PC-3 (cell line): ENCODE measurements at regions of chr4 and their contacts with region 1.

Region 1: GRCh38 chr4:42412251-42412650 is 15.0 kb downstream of the SHISA3 start:
- DNase-seq: peak; percentile 89
- ATAC-seq: peak; percentile 72
- H3K4me3 ChIP-seq: peak overlapping the region; percentile 44
- H3K27ac ChIP-seq: peak overlapping the region; percentile 94
- H3K4me1 ChIP-seq: peaks cover 96% of the 10 kb centered on the region
- H3K27me3 ChIP-seq: no peaks in the 10 kb centered on the region
- CTCF ChIP-seq: no peak

Region 2: DNA sequence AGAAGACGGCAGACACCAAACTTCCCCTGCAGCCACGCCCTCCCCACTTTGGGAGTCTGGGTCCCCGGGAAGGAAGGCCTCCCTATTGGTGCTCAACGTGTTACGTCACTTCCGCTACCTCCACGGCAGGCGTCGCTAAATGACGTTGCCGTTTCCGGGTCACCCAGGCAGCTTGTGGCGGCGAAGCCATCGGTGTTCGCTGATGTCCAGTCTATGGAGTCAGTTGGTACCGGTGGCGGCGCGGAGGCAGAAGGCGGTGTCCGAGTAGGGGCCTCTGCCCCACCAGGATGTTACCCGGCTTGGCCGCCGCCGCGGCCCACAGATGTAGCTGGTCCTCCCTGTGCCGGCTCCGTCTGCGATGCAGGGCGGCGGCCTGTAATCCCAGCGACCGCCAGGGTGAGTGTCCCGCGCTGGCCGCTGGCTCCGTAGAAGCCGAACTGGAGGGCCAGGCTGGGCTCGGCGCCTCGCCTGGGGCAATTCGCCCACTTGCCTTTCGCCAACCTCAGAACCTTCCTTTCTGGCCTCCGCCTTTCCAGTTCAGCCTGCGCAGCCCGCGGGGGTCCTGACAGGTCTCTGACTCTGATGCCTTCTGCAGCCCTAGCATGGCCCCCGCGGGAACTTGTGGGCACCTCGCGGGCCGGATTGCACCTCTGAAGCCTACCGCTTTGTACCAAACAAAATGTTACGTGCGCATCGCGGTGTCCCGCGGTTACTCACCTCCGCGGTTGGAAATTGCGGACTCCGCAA is 421.7 kb before region 1 on chr4 and contains the start of gene SLC30A9:
- CTCF ChIA-PET with region 1: no interaction called
- POLR2A ChIA-PET with region 1: no interaction called
- intact Hi-C with region 1: loop called (anchors 5 kb)
- DNase-seq: peak; percentile 91
- ATAC-seq: peak; percentile 83
- H3K4me3 ChIP-seq: peak within 1 kb of the TSS; percentile 98
- H3K27ac ChIP-seq: peak within 1 kb of the TSS; percentile 32
- H3K4me1 ChIP-seq: peaks cover 15% of the 10 kb centered on the region
- H3K27me3 ChIP-seq: no peaks in the 10 kb centered on the region
- CTCF ChIP-seq: no peak; the same call in 1 of the 2 replicates
- total RNA-seq, gene SLC30A9: 32.4 and 32.7 TPM in 2 replicates

Region 3: DNA sequence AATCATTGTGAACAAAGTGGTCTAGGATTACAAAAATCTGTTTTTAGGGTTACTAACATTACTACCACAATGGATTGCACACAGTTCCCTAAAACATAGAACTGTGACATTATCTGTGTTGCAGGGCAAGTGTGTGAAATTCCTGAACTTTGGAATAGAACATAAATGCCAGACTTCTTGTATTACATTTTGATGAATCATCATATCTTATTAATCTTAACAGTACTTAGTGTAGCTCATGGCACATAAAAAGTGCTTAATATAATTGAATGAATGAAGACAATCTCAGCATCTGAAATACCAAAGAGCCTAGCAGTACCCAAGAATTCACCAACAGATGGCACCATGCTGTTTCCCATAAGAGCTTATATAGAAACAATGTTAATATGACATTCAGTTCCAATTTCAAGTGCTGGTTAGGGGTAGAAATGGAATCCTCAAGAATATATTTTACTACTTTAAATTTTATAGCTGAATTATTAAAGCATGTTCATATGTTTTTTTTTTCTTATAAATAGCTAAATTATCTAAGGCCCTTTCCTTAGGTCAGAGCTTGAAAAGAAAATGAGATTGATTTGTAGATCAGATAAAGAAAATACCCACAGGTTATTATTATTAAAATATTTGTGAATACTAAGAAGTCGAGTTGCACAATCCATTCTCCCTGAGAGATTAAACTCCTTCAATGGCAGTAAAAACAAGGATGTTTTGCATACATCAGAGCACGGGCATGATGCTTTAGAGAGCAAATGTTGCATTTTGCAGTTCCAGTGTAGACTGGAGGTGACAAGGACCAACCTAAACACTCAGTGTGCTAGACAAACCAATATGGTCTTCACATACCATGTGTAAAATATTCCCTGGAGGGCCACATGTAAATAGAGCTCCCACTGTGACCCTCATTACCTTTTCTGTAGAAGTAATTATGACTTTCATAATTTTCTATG is 40.7 kb before region 1 on chr4:
- CTCF ChIA-PET with region 1: interaction called, 4 read pairs
- POLR2A ChIA-PET with region 1: no interaction called
- intact Hi-C with region 1: loop called (anchors 5 kb)
- DNase-seq: peak; percentile 77
- ATAC-seq: peak; percentile 80
- H3K4me3 ChIP-seq: no peak overlapping the region
- H3K27ac ChIP-seq: no peak overlapping the region
- H3K4me1 ChIP-seq: no peaks in the 10 kb centered on the region
- H3K27me3 ChIP-seq: no peaks in the 10 kb centered on the region
- CTCF ChIP-seq: peak; percentile 68

Region 4: DNA sequence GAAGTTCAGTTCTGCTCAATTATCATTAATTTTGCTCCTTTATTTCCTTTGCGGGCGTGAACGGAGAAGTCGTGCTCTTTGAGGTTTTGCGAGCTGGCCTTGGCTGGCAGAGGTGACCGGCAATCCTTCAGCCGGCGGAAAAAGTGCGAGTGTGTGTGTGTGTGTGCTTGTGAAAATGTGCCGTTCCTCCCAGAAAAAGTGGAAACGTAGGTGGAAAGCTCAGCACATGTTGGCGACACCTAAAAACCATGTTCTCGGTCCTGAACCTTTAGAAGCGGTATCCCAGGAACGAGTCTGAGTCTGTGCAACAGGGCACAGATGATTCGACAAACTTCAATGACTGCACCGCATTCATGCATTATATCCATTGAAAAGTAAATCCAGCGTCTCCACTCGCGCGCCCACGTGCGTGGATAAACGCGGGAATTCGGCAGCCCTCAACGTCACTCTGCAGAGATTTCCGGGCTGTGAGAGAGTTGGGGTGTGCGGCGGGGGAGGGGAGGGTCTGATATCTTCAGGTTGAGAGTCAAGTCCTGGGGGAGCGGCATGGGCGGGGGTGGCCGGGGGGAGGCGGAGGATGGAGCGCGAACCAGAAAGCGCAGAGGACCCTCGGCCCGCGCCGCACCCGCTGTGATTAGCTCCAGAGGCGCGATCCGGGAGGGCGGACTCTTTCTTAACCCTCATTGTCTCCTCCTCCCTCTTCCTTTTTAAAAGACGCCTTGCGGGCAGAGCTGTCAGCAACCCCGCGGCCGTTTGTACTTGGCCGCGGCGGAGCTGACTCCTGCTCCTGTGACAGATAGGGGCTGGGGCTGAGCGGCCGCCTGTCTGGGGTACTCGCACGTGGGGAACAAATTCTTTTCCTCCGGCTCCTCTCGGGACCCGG is 15.3 kb before region 1 on chr4 and contains the start of gene SHISA3:
- CTCF ChIA-PET with region 1: no interaction called
- POLR2A ChIA-PET with region 1: interaction called, 5 read pairs
- intact Hi-C with region 1: loop called (anchors 2 kb)
- DNase-seq: peak; percentile 53
- ATAC-seq: peak; percentile 68
- H3K4me3 ChIP-seq: peak within 1 kb of the TSS; percentile 90
- H3K27ac ChIP-seq: no peak within 1 kb of the TSS
- H3K4me1 ChIP-seq: peaks cover 11% of the 10 kb centered on the region; the same call in 1 of the 2 replicates
- H3K27me3 ChIP-seq: no peaks in the 10 kb centered on the region
- CTCF ChIP-seq: no peak
- total RNA-seq, gene SHISA3: 29.5 and 33.5 TPM in 2 replicates

Region 5: DNA sequence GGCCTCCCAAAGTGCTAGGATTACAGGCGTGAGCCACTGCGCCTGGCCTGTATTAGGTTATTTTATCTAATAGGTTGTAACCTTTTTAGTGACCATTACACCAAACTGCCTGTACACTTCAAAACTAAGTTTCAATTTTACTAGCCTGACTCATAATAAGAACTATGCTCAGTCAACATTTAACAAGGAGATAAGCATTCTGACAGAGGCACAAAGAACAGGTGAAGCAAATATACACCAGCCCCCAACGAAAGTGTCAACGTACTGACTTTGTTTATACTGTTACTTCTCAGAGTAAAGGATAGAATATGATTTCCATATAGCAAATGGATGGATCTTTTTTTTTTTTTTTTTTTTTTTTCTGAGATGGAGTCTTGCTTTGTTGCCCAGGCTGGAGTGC is 47.8 kb after region 1 on chr4:
- CTCF ChIA-PET with region 1: no interaction called
- POLR2A ChIA-PET with region 1: no interaction called
- intact Hi-C with region 1: loop called (anchors 5 kb)
- DNase-seq: peak; percentile 72
- ATAC-seq: peak; percentile 92
- H3K4me3 ChIP-seq: no peak overlapping the region
- H3K27ac ChIP-seq: no peak overlapping the region
- H3K4me1 ChIP-seq: peaks cover 11% of the 10 kb centered on the region
- H3K27me3 ChIP-seq: no peaks in the 10 kb centered on the region
- CTCF ChIP-seq: no peak

Region 6: DNA sequence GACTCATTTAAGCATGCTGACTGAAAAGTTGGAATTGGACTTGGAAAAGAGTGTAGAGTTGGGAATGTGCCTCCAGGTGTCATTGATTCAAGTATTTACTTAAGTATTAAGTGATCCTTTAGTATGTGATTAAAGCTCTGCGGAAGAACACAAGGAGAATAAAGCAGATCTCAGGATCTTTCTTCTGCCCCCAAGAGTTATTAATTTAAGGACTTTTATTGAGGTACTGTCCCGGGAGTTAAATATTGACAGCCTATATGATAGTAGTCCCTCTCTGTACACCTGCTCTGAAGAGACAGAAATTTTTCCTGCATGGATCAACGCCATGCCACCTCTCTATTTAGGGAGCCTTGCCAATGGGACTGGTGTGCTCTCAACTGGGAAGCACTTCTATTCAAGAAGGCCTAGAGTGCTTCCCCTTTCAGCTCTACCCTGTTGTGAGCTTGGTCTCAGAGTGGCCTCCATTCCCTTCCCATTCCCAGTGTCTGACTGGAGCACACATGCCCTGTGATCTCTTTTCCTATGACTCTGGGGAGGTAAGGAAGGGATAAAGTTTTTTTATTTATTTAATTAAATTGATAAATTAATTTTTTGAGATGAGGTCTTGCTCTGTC is 60.9 kb after region 1 on chr4:
- CTCF ChIA-PET with region 1: no interaction called
- POLR2A ChIA-PET with region 1: no interaction called
- intact Hi-C with region 1: no loop called
- DNase-seq: no peak
- ATAC-seq: no peak
- H3K4me3 ChIP-seq: no peak overlapping the region
- H3K27ac ChIP-seq: no peak overlapping the region
- H3K4me1 ChIP-seq: no peaks in the 10 kb centered on the region
- H3K27me3 ChIP-seq: no peaks in the 10 kb centered on the region
- CTCF ChIP-seq: no peak

Region 7: GRCh38 chr4:42519803-42520417 is 107.7 kb after region 1 on chr4:
- CTCF ChIA-PET with region 1: no interaction called
- POLR2A ChIA-PET with region 1: no interaction called
- intact Hi-C with region 1: no loop called
- DNase-seq: peak; percentile 81
- ATAC-seq: peak; percentile 64
- H3K4me3 ChIP-seq: no peak overlapping the region
- H3K27ac ChIP-seq: no peak overlapping the region
- H3K4me1 ChIP-seq: no peaks in the 10 kb centered on the region
- H3K27me3 ChIP-seq: no peaks in the 10 kb centered on the region
- CTCF ChIP-seq: peak; percentile 76

Region 8: DNA sequence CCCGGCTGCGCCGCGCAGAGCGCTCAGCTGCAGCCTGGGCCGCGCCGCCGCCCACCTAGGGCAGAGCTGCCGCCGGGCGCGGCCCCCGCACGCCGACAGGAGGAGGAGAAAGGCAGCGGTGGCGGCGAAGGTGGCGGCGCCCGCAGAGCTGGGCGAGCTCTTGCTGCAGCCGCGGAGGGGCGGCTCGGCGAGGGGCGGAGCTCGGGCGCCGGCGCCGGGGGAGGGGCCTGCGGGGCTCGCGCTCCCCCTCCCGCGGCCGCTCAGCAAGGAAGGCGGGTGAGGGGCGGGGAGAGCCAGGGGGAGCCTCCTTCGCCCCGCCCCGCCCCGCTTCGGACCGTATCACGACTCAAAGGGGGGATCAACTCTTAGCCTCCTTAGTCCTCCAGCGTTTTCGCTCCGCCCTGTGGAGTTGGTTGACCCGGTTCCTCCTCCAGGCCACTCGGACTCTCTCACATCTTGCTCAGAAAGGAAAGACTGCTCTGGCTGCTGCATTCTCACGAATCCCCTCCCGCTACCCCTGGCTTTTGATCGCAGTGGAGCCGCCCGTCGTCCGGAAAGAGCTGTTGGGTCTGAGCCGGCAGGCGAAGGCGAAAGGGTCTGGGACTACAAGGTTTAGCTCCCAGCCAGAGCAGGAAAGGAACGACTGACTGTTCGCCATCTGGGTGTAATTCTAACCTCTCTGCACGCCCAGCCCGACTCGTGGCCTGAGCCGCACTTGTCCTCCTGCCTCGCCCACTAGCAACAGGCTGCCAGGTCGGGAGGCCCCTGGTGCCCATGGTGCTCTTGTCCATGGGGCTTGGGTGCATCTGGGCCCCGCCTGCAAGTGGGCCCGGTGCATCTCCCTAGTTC is 244.9 kb after region 1 on chr4 and contains the start of gene ATP8A1:
- CTCF ChIA-PET with region 1: no interaction called
- POLR2A ChIA-PET with region 1: no interaction called
- intact Hi-C with region 1: loop called (anchors 5 kb)
- DNase-seq: peak; percentile 84
- ATAC-seq: peak; percentile 63
- H3K4me3 ChIP-seq: peak within 1 kb of the TSS; percentile 84
- H3K27ac ChIP-seq: peak within 1 kb of the TSS; percentile 82
- H3K4me1 ChIP-seq: peaks cover 39% of the 10 kb centered on the region
- H3K27me3 ChIP-seq: no peaks in the 10 kb centered on the region
- CTCF ChIP-seq: no peak
- total RNA-seq, gene ATP8A1: 3.9 and 5.3 TPM in 2 replicates